ENCODE measurements at regions of chr7 and their contacts with region 1.

Region 1: DNA sequence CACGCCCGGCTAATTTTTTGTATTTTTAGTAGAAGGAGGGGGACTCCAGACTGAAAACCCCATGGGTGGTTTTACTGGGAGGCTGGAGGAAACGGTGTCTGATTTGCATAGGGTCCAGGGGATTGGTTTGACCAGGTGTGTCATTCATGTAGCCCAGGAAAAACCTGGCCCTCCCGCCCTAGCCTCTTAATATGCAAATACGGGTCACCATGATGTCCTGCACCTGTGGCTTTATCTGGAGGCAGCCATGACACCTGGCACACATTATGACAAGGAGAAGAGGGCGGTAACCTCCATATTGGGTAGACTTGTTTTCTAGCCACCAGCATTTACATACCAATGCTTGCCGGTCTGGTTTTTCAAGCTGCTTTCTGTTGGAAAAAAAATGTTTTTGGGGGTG is 68.0 kb downstream of the TRIL start:
- H3K4me3 ChIP-seq: no peak overlapping the region
- H3K27ac ChIP-seq: no peak overlapping the region
- H3K4me1 ChIP-seq: no peaks in the 10 kb centered on the region
- CTCF ChIP-seq: no peak

Region 2: GRCh38 chr7:28685644-28686417 is 204.3 kb before region 1 on chr7:
- CTCF ChIA-PET with region 1: no interaction called
- POLR2A ChIA-PET with region 1: interaction called, 10 read pairs
- H3K4me3 ChIP-seq: peak overlapping the region; percentile 32
- H3K27ac ChIP-seq: peak overlapping the region; percentile 97
- H3K4me1 ChIP-seq: peaks cover 17% of the 10 kb centered on the region
- CTCF ChIP-seq: no peak